Activated CD8-positive, alpha-beta T cell treated with anti-CD3 and anti-CD28 coated beads, Interleukin-2, amount 10 ng/mL, durations not matched to agents 7 days and 5 days (primary cell): ENCODE measurements at regions of chr7 and their contacts with region 1.

Region 1: DNA sequence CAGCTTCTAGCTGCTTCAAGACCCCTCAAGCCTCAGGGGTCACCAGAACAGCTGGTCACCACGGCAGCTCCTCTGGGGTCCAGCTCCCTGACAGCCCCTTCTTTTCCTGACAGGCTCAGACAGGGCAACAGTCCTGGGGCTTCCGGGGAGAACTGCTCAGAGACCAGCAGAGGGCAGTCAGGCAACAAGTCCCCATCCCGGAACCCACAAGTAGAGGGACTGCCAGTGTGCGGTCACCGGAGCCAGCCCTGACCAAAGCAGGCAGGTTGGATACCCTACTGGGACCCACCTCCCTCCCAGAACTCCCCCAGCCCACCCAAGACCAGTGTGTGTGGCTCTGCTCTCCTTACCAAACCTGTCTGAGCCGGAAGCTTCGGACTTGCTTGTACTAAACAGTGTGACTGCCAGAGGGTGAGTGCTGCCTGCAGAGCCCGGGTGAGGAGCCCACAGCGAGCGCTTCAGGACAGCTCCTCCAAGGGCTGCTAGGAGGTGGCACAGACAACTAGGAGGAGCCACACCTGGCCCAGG is 40.3 kb downstream of the YKT6 start:
- DNase-seq: peak; percentile 77
- ATAC-seq: peak; percentile 87
- H3K4me3 Mint-ChIP-seq: peak overlapping the region; percentile 18
- H3K27ac Mint-ChIP-seq: peak overlapping the region; percentile 75
- H3K4me1 Mint-ChIP-seq: peaks cover 6% of the 10 kb centered on the region
- H3K27me3 Mint-ChIP-seq: no peaks in the 10 kb centered on the region

Region 2: GRCh38 chr7:43824963-43825362 is 416.1 kb before region 1 on chr7:
- CTCF ChIA-PET with region 1: no interaction called
- POLR2A ChIA-PET with region 1: no interaction called
- DNase-seq: no peak
- ATAC-seq: no peak
- H3K4me3 Mint-ChIP-seq: no peak overlapping the region
- H3K27ac Mint-ChIP-seq: no peak overlapping the region
- H3K4me1 Mint-ChIP-seq: peaks cover 3% of the 10 kb centered on the region
- H3K27me3 Mint-ChIP-seq: peaks cover 39% of the 10 kb centered on the region

Region 3: DNA sequence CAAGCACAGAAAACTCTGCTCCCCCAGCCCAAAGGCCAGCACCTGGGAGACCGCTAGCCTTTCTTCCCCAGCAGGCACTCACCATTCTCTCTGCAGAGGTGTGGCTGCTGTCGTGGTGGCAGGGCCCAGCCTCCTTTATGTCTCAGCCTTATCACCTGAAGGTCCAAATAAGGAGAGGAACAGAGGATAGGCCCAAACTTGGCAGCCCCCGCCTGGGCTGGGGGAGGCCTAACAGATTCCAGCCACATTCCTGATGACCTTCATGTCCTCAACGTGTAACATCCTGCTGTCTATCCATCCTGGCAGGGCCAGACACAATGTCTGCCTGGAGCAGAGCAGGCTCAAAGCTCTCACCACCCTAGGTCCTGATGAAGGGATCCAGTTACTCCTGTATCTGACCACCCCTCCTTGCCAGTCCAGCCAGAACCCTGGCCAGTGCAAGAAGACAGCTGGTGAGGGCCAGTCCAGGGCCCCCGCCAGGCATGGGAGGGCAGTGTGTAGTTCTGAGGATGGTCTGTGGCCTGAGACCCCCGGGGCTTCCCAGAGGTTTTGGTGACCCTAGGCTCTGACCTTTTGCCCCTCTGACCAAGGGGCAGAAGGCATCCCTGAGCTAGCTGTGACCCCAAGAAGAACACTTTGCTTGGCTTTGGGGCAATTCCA is 99.7 kb before region 1 on chr7 and contains the start of gene MYL7:
- CTCF ChIA-PET with region 1: no interaction called
- POLR2A ChIA-PET with region 1: no interaction called
- DNase-seq: no peak
- ATAC-seq: no peak
- H3K4me3 Mint-ChIP-seq: no peak within 1 kb of the TSS
- H3K27ac Mint-ChIP-seq: no peak within 1 kb of the TSS
- H3K4me1 Mint-ChIP-seq: peaks cover 10% of the 10 kb centered on the region
- H3K27me3 Mint-ChIP-seq: peaks cover 23% of the 10 kb centered on the region
- total RNA-seq, gene MYL7: not detected

Region 4: DNA sequence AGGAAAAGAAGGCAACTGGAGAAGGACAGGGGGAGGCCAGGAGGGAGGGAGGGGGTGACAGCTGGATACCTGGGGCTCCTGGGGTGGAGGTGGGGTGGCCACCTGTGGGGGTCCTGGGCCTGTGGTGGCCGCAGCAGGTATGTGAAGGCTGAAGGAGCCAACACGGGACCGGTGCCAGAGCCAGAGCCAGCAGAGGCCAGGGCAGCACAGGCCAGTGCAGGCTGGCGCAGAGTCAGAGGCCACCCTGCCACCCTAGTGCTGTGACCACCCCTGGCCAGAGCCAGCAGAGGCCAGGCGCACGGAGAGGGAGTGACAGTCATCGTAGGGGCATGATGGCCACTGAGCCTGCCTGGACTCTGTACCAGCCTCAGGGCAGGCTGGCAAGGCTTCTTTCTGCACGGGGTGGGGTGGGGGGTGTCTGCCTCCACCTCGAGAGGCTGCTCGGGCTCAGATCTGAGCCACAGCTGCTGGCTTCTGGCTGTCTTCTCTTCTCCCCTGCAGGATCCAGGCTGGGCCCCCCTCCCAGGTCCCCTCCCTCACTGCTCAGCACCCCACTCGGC is 11.4 kb before region 1 on chr7:
- CTCF ChIA-PET with region 1: no interaction called
- POLR2A ChIA-PET with region 1: no interaction called
- DNase-seq: no peak
- ATAC-seq: no peak
- H3K4me3 Mint-ChIP-seq: no peak overlapping the region
- H3K27ac Mint-ChIP-seq: no peak overlapping the region
- H3K4me1 Mint-ChIP-seq: no peaks in the 10 kb centered on the region
- H3K27me3 Mint-ChIP-seq: no peaks in the 10 kb centered on the region

Region 5: GRCh38 chr7:44257618-44258422 is 16.8 kb after region 1 on chr7:
- CTCF ChIA-PET with region 1: interaction called, 27 read pairs
- POLR2A ChIA-PET with region 1: interaction called, 4 read pairs
- DNase-seq: peak; percentile 83
- ATAC-seq: peak; percentile 91
- H3K4me3 Mint-ChIP-seq: peak overlapping the region; percentile 15
- H3K27ac Mint-ChIP-seq: peak overlapping the region; percentile 96
- H3K4me1 Mint-ChIP-seq: peaks cover 29% of the 10 kb centered on the region
- H3K27me3 Mint-ChIP-seq: no peaks in the 10 kb centered on the region

Region 6: GRCh38 chr7:44477063-44477830 is 236.2 kb after region 1 on chr7:
- CTCF ChIA-PET with region 1: interaction called, 19 read pairs
- POLR2A ChIA-PET with region 1: no interaction called
- DNase-seq: peak; percentile 76
- ATAC-seq: peak; percentile 93
- H3K4me3 Mint-ChIP-seq: no peak overlapping the region
- H3K27ac Mint-ChIP-seq: no peak overlapping the region
- H3K4me1 Mint-ChIP-seq: peaks cover 22% of the 10 kb centered on the region
- H3K27me3 Mint-ChIP-seq: no peaks in the 10 kb centered on the region

Region 7: DNA sequence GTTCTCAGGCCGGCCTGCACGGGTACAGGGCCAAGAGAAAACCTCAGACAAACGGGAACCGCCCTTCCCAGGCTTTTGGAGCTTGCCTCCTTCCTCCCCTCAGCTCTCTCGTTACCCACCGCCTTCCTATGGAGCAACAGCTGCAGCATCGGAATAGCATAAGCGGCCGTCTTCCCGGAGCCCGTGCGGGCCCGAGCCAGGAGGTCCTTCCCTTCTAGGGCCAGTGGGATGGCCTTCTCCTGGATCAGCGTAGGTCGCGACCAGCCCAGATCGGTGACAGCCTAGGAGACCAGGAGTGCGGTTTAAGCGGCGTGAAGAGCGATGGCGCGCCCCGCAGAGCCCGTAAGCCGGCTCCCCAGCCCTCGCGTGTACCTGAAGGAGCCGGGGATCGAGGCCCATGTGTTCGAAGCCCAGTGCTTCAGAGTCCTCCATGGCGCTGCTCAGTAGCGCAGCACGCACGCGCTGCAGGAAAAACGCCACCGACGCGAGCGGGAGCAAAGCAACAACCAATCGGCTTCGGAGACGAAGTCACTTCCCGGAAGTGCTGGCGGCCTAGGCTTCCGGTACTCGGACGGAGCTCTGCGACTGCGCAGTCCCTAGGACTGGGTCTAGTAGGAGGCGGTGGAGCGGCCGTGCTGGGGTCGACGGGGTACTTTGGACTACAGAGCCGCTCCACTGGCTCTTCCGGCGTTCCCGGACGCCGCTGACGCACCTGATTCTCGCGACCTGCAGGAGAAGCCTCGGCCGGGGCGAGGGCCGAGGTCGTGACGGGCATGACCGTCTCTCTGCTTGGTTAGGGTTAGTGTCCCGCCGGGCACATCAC is 332.6 kb after region 1 on chr7 and contains the start of gene DDX56:
- CTCF ChIA-PET with region 1: interaction called, 11 read pairs
- POLR2A ChIA-PET with region 1: no interaction called
- DNase-seq: peak; percentile 96
- ATAC-seq: peak; percentile 95
- H3K4me3 Mint-ChIP-seq: peak within 1 kb of the TSS; percentile 99
- H3K27ac Mint-ChIP-seq: peak within 1 kb of the TSS; percentile 96
- H3K4me1 Mint-ChIP-seq: peaks cover 38% of the 10 kb centered on the region
- H3K27me3 Mint-ChIP-seq: no peaks in the 10 kb centered on the region
- total RNA-seq, gene DDX56: 83.6 to 86.5 TPM